ENCODE measurements at regions of chr17 and their contacts with region 1.

Region 1: DNA sequence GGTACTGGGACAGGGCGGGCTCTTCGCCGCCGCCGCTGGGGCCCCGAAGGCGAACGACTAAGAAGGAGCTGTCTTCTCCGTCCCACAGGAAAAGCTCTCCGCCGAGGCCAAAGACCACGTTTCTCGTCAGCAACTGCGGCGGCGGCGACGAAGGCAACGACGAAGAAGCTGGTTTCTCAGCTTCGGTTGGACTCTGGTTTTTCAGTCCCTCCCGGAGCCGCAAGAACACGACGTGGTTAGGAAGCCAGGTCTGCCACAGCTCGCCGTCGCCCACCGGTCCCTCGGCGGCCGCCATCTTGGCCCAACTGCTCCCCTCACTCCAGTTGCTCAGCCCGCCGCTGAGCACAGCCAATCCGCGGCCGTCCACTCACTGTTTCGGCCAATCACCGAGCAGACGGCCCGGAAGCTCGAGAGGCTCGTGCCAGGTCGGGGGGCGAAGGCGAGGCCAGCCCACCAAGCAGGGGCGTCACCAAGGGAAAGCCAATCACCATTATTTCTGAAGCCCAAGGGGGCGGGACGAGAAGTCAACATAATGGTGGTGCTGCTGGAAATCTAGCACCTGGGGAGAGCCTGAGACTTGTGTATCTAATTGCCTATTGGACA is at the start of gene NUP88:
- DNase-seq: peak; percentile 94
- ATAC-seq: peak; percentile 97
- H3K4me3 Mint-ChIP-seq: peak within 1 kb of the TSS; percentile 100
- H3K27ac Mint-ChIP-seq: peak within 1 kb of the TSS; percentile 99
- H3K4me1 Mint-ChIP-seq: peaks cover 25% of the 10 kb centered on the region
- H3K27me3 Mint-ChIP-seq: no peaks in the 10 kb centered on the region
- total RNA-seq, gene NUP88: 93.6 to 99.5 TPM

Region 2: GRCh38 chr17:5438716-5439445 is 19.4 kb after region 1 on chr17 and contains the start of gene C1QBP:
- POLR2A ChIA-PET with region 1: interaction called, 21 read pairs
- DNase-seq: peak; percentile 98
- ATAC-seq: peak; percentile 93
- H3K4me3 Mint-ChIP-seq: peak within 1 kb of the TSS; percentile 85
- H3K27ac Mint-ChIP-seq: peak within 1 kb of the TSS; percentile 96
- H3K4me1 Mint-ChIP-seq: peaks cover 25% of the 10 kb centered on the region
- H3K27me3 Mint-ChIP-seq: no peaks in the 10 kb centered on the region
- total RNA-seq, gene C1QBP: 109 to 112 TPM

Measured in activated naive CD8-positive, alpha-beta T cell treated with anti-CD3 and anti-CD28 coated beads, Interleukin-2, amount 10 ng/mL, durations not matched to agents 7 days and 5 days (primary cell).